Lower lobe of right lung (tissue), 2 donors: ENCODE measurements at regions of chr5 and their contacts with region 1.

Region 1: GRCh38 chr5:32489791-32490582 is 45.4 kb upstream of the ZFR start:
- DNase-seq: peak; percentile 65
- ATAC-seq: peak; percentile 76 to 77
- H3K4me3 ChIP-seq: no peak overlapping the region
- H3K27ac ChIP-seq: no peak overlapping the region
- H3K4me1 ChIP-seq: peaks cover 9% of the 10 kb centered on the region
- H3K27me3 ChIP-seq: no peaks in the 10 kb centered on the region
- CTCF ChIP-seq: peak; percentile 79

Region 2: DNA sequence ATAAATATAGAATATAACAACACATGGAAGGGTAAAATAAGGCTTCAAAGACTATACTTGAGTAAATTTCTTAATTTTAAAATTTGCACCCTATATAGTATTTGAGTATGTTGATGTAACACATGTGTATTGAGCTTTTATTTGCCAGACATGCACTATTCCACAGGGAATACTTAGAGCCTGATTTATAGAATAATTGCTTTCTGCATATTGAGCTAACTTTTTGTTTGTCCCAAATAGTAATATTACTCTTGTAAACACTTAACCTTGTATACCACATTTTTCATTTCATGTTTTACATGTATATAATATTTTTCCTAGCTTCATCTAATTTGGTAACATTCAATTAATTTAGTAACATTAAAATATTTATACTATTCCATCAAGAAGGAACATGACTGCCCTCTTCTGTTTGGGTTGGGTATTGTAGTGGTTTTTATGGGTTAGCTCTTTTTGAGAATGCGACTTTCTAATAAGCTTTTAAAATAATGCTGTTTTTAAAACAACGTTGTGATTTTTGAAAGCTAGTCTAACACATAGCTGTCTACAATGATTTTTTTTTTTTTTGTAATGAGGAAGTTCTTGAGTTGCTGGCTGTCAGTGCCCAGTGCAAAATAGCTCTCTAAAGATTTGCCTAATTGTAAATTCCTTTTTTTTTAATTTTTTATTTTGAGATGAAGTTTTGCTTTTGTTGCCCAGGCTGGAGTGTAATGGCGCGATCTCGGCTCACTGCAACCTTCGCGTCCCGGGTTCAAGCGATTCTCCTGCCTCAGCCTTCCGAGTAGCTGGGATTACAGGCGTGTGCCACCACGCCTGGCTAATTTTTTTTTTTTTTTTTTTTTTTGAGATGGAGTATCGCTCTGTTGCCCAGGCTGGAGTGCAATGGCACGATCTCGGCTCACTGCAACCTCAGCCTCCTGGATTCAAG is 100.2 kb after region 1 on chr5:
- intact Hi-C with region 1: loop called (anchors 5 kb)
- DNase-seq: no peak
- ATAC-seq: no peak
- H3K4me3 ChIP-seq: no peak overlapping the region
- H3K27ac ChIP-seq: no peak overlapping the region
- H3K4me1 ChIP-seq: peaks cover 20% of the 10 kb centered on the region
- H3K27me3 ChIP-seq: no peaks in the 10 kb centered on the region
- CTCF ChIP-seq: peak; percentile 81